Thyroid gland (tissue), 4 donors: ENCODE measurements at regions of chr7 and their contacts with region 1.

Region 1: DNA sequence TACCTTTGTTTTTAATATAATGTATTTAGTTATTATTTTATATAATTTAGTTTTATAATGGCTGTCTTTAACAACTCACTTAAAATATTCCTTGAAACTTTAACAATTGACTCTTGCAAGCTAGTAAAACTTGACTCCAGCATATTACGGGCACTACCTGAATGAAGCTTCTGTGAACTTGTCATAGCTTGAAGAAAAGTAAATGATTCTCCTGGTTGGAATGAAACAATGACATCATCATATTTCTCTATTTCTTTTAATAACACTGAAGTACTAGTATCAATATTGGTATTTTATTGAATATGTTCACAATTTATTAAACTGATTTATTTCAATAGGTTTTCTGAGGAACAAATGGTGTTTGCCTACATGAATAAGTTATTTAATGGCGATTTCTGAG is 128.4 kb upstream of the PHF14 start:
- DNase-seq: no peak
- H3K4me3 ChIP-seq: no peak overlapping the region
- H3K27ac ChIP-seq: no peak overlapping the region
- H3K4me1 ChIP-seq: no peaks in the 10 kb centered on the region
- H3K27me3 ChIP-seq: no peaks in the 10 kb centered on the region
- CTCF ChIP-seq: no peak
- POLR2A ChIP-seq: no peak

Region 2: GRCh38 chr7:10908600-10908999 is 63.4 kb after region 1 on chr7:
- intact Hi-C with region 1: loop called (anchors 10 kb)
- DNase-seq: no peak
- H3K4me3 ChIP-seq: no peak overlapping the region
- H3K27ac ChIP-seq: no peak overlapping the region
- H3K4me1 ChIP-seq: no peaks in the 10 kb centered on the region
- H3K27me3 ChIP-seq: no peaks in the 10 kb centered on the region
- CTCF ChIP-seq: no peak
- POLR2A ChIP-seq: no peak

Region 3: GRCh38 chr7:10924366-10924765 is 79.1 kb after region 1 on chr7:
- intact Hi-C with region 1: no loop called
- DNase-seq: no peak
- H3K4me3 ChIP-seq: no peak overlapping the region
- H3K27ac ChIP-seq: no peak overlapping the region
- H3K4me1 ChIP-seq: no peaks in the 10 kb centered on the region
- H3K27me3 ChIP-seq: no peaks in the 10 kb centered on the region
- CTCF ChIP-seq: no peak
- POLR2A ChIP-seq: no peak